ENCODE measurements at regions of chr3 and their contacts with region 1.

Region 1: DNA sequence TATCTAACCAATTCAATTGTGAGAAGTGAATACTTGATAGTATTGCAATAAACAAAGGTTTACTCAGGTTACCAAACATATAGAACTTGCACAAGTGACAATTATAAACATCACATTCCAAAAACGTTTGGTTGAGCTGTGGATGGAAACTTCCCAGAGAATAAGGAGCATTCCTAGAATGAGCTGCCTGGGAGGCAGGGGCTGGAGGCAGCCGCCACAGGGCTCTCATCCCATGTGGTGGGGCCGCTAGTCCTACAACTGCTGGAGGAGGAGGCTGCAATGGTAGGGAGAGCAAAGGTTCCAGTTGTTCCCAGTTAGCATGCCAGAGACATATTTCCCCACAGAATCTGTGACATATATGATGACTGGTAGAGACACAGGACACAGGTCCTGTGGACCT is 50.4 kb downstream of the CD47 start:
- DNase-seq: no peak
- H3K4me3 ChIP-seq: no peak overlapping the region
- H3K4me3 Mint-ChIP-seq: no peak overlapping the region
- H3K27ac ChIP-seq: no peak overlapping the region
- H3K27ac Mint-ChIP-seq: peak overlapping the region in 3 of 7 donors; percentile 42 to 56 (median 50)
- H3K4me1 ChIP-seq: no peaks in the 10 kb centered on the region
- H3K4me1 Mint-ChIP-seq: peaks cover 15 to 41% (median 20%) of the 10 kb centered on the region in 4 donors
- H3K27me3 ChIP-seq: no peaks in the 10 kb centered on the region
- H3K27me3 Mint-ChIP-seq: no peaks in the 10 kb centered on the region

Region 2: DNA sequence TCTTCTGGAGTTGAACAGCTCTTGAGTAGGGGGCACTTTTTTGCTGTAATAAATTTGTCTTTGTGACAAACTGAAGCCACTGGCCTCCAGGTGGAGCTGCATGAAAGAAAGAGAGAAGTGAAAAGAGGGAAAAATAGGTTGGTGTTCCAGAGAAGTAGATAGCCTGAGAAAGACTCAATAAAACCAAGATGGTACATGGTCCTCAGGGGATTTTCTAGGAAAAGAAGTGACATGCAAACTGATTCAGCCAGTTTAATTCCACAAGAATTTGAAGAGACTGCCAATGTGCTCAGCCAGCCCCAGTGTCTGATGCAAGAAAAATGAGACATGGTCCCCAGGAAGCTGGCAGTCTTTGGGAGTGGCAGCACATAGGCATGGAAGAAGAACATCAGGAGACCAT is 102.3 kb before region 1 on chr3:
- CTCF ChIA-PET with region 1: interaction called, 5 read pairs
- POLR2A ChIA-PET with region 1: no interaction called
- intact Hi-C with region 1: loop called (anchors 10 kb)
- DNase-seq: peak in 3 of 5 donors; percentile 10 to 23 (median 15)
- H3K4me3 ChIP-seq: no peak overlapping the region
- H3K4me3 Mint-ChIP-seq: no peak overlapping the region
- H3K27ac ChIP-seq: no peak overlapping the region
- H3K27ac Mint-ChIP-seq: no peak overlapping the region
- H3K4me1 ChIP-seq: peaks cover 15% of the 10 kb centered on the region
- H3K4me1 Mint-ChIP-seq: peaks cover 11 to 21% (median 16%) of the 10 kb centered on the region in 4 donors
- H3K27me3 ChIP-seq: no peaks in the 10 kb centered on the region
- H3K27me3 Mint-ChIP-seq: peaks cover 1 to 11% of the 10 kb centered on the region in 2 donors

Region 3: DNA sequence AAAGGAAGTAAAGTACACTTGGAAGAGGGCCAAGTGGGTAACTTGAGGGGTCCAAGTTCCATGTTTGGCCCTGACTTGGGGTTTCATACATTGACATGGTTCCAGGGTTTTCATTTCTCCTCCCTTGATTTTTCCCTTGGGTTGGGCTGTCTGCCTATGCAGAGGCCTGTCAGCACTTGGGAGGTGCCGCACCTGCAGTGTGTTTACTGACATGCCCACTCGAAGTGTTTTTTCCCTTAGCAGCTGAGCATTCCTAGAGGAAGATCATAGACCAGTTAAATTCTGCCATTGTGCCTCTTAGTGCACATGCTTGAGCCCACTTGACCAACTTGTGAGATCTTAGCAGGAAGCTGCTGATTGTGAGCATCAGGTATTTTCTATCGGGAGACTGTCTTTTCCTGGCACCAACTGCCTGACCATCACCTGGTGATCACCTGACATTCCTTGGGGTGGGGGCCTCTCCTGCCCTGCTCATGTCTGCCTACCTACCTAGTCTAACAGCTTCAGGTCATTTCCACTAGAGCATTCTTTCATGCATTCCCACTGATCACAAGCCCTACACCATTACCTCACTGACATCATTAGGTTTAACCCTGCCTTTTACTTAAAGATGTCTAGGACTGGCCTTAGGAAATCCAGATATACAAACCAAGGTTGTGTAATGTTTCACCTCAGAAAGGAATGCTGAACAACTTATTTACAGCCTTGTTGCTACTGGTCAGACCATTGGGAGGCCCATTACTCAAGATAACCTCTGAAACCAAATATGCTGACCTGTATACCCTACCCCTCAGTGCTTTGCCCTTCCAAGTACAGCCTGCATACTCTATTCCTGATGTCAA is 18.0 kb before region 1 on chr3:
- CTCF ChIA-PET with region 1: no interaction called
- POLR2A ChIA-PET with region 1: no interaction called
- intact Hi-C with region 1: no loop called
- DNase-seq: no peak
- H3K4me3 ChIP-seq: no peak overlapping the region
- H3K4me3 Mint-ChIP-seq: no peak overlapping the region
- H3K27ac ChIP-seq: no peak overlapping the region
- H3K27ac Mint-ChIP-seq: peak overlapping the region in 3 of 7 donors; percentile 1 to 33 (median 15)
- H3K4me1 ChIP-seq: no peaks in the 10 kb centered on the region
- H3K4me1 Mint-ChIP-seq: peaks cover 2 to 12% (median 9%) of the 10 kb centered on the region in 4 donors
- H3K27me3 ChIP-seq: no peaks in the 10 kb centered on the region
- H3K27me3 Mint-ChIP-seq: no peaks in the 10 kb centered on the region